Activated CD4-positive, alpha-beta T cell treated with anti-CD3 and anti-CD28 coated beads for 36 hours (primary cell): ENCODE measurements at regions of chr15 and their contacts with region 1.

Region 1: DNA sequence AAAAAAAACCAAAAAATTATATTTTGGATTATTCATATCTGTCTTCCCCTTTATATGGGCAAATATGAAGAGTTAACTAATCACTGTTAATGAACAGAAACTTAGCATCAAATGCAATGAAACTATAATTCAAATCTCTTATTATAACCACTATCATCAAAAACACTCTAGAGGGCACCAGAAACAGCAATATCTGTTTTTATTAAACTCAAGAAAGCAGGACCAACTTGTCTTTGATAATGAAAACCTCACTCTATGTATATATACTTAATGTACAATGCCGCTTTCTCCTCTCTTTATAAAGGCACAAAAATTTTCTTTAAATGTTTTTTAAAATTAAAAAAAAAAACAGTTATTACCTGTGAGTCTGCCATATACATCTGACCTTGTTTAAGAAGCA is 92.7 kb downstream of the UACA start:
- DNase-seq: no peak
- ATAC-seq: no peak
- H3K4me3 Mint-ChIP-seq: no peak overlapping the region
- H3K27ac Mint-ChIP-seq: no peak overlapping the region
- H3K4me1 Mint-ChIP-seq: peaks cover 18% of the 10 kb centered on the region
- H3K27me3 Mint-ChIP-seq: peaks cover 2% of the 10 kb centered on the region

Region 2: DNA sequence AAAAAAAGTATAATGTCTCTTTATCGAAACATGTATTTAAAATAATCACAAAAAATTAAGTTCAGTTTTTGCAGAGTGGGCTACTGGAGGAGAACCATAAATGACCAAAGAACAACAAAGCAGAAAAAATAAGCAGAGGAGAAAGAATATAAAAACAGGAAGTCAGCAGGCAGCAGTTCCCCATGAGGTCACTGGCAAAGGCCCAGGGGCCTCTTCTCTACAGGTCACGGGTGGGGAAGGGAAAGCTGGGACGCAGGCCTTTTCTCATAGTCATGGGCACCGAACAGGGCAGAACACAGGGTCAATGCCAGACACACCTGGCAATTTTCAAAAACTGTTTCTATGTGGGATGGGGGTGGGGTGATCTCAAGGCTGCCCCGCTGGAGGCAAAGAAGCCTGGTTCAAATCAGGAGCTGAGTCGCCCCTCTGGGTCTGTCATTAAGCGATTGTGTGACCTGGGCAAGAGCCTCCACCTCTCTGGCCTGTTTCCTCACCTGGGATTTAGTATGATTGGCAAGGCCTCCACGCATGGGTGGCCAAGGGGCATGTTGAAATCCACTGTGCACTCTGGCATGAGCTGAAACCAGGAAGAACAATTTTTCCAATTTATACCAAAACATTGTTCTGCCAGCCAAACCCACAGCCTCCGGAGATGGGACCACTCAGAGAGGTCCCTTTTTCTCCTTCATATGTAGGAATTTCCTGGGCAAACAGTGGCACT is 136.5 kb after region 1 on chr15:
- CTCF ChIA-PET with region 1: interaction called, 4 read pairs
- POLR2A ChIA-PET with region 1: no interaction called
- intact Hi-C with region 1: loop called in 1 of 2 experiments (anchors 5 kb)
- DNase-seq: no peak
- ATAC-seq: no peak
- H3K4me3 Mint-ChIP-seq: no peak overlapping the region
- H3K27ac Mint-ChIP-seq: no peak overlapping the region
- H3K4me1 Mint-ChIP-seq: peaks cover 2% of the 10 kb centered on the region
- H3K27me3 Mint-ChIP-seq: peaks cover 2% of the 10 kb centered on the region